Stomach (tissue), 19 donors: ENCODE measurements at regions of chr2 and their contacts with region 1.

Region 1: GRCh38 chr2:39069136-39069515 is 51.7 kb downstream of the SOS1 start:
- DNase-seq: peak in 1 of 2 donors; percentile 15
- H3K4me3 ChIP-seq: no peak overlapping the region
- H3K27ac ChIP-seq: no peak overlapping the region
- H3K4me1 ChIP-seq: peaks cover 0 to 47% (median 9%) of the 10 kb centered on the region in 4 donors
- H3K27me3 ChIP-seq: no peaks in the 10 kb centered on the region
- CTCF ChIP-seq: no peak
- EP300 ChIP-seq: no peak
- POLR2A ChIP-seq: no peak

Region 2: GRCh38 chr2:38523728-38524437 is 545.2 kb before region 1 on chr2:
- intact Hi-C with region 1: no loop called
- DNase-seq: no peak
- H3K4me3 ChIP-seq: no peak overlapping the region
- H3K27ac ChIP-seq: peak overlapping the region in 1 of 5 donors; percentile 38
- H3K4me1 ChIP-seq: peaks cover 0 to 30% (median 11%) of the 10 kb centered on the region in 4 donors
- H3K27me3 ChIP-seq: peaks cover 0 to 6% (median 5%) of the 10 kb centered on the region in 3 donors
- CTCF ChIP-seq: peak in 1 of 7 experiments; percentile 8
- EP300 ChIP-seq: no peak
- POLR2A ChIP-seq: no peak

Region 3: GRCh38 chr2:38991899-38992298 is 77.2 kb before region 1 on chr2:
- intact Hi-C with region 1: no loop called
- DNase-seq: no peak
- H3K4me3 ChIP-seq: no peak overlapping the region
- H3K27ac ChIP-seq: no peak overlapping the region
- H3K4me1 ChIP-seq: no peaks in the 10 kb centered on the region
- H3K27me3 ChIP-seq: no peaks in the 10 kb centered on the region
- CTCF ChIP-seq: no peak
- EP300 ChIP-seq: no peak
- POLR2A ChIP-seq: no peak

Region 4: GRCh38 chr2:39234754-39235153 is 165.6 kb after region 1 on chr2:
- intact Hi-C with region 1: loop called (anchors 5 kb)
- DNase-seq: no peak
- H3K4me3 ChIP-seq: no peak overlapping the region
- H3K27ac ChIP-seq: no peak overlapping the region
- H3K4me1 ChIP-seq: peaks cover 0 to 4% (median under 1%) of the 10 kb centered on the region in 4 donors
- H3K27me3 ChIP-seq: no peaks in the 10 kb centered on the region
- CTCF ChIP-seq: no peak
- EP300 ChIP-seq: no peak
- POLR2A ChIP-seq: no peak